ENCODE measurements at regions of chr4 and their contacts with region 1.

Region 1: DNA sequence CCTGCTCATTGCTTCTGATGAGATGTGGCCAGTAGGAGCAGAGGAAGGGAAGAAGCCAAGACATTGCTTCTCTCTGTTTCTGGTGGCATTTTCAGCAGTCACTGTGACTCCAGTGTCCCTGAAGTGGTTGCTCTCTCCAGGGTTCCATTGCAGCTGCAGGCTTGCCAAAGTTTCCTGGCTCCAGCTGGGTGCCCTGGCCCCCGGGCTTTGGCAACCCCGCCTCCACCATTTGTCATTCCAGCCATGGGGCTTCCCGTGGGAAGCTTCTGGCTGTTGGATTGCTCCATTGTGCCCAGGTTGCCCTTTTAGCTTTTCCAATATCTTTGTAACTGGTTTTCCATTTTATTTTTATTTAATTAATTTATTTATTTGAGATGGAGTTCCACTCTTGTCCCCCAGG is 12.7 kb downstream of the FGFBP1 start:
- DNase-seq: no peak
- ATAC-seq: no peak

Region 2: DNA sequence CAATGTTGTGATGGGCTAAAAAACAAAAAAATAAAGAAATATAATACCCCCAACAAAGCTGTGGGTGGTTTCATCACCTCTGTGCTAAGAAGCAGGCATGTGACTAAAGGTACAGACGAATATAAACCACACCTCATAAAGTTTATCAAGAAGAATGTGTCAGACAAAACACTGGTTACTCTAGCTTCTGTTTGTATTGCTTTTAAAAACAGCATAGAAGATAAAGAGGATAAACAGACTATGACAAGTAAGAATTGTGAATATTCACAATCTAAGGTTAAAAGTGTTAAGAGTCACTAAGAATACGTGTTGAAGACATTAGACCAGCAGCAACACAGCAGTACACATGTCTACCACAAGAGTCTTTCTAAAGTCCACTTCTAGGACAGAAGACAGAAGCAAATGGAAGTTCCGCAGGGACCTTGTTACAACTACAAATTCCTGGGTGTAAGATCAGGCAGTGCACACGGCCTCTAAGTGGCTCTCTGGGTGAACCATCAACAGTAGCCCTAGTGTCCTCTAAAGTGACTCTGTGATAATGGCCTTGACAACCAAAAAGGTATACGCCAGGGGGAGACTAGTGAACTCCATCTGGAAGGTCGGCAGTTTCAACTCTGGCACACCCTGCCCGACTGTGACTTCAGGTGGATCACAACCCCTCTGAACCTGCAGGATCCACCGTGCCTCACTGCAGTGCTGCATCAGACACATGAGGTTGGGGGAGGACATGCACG is 45.4 kb after region 1 on chr4:
- intact Hi-C with region 1: loop called (anchors 1 kb)
- DNase-seq: no peak
- ATAC-seq: no peak